Right ventricle myocardium inferior (tissue), 1 donor: ENCODE measurements at regions of chr6 and their contacts with region 1.

Region 1: DNA sequence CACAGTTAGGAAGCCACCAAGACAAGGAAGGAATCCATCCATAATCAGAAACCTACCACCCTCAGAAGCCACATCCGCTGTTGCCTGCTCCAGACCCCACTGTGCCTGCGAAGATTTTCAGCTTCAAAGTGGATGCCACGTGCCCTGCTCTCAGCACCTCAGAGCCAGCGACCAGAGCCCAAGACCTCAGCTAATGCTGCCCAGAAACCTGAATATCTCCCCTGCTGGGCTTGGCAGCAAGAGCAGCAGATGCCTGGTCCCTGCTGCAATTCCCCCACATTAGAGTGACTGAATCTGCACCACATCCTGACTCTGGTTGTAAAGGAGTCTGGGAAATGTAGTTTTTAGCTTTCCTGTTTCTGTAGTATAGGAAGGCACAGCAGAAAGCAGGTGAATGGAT is 10.7 kb upstream of the ULBP3 start:
- DNase-seq: no peak
- ATAC-seq: no peak

Region 2: GRCh38 chr6:149515494-149515893 is 564.1 kb before region 1 on chr6:
- intact Hi-C with region 1: no loop called
- DNase-seq: no peak
- ATAC-seq: no peak

Region 3: GRCh38 chr6:150334790-150335783 is 255.5 kb after region 1 on chr6:
- intact Hi-C with region 1: loop called (anchors 1 kb)
- DNase-seq: no peak
- ATAC-seq: no peak

Region 4: DNA sequence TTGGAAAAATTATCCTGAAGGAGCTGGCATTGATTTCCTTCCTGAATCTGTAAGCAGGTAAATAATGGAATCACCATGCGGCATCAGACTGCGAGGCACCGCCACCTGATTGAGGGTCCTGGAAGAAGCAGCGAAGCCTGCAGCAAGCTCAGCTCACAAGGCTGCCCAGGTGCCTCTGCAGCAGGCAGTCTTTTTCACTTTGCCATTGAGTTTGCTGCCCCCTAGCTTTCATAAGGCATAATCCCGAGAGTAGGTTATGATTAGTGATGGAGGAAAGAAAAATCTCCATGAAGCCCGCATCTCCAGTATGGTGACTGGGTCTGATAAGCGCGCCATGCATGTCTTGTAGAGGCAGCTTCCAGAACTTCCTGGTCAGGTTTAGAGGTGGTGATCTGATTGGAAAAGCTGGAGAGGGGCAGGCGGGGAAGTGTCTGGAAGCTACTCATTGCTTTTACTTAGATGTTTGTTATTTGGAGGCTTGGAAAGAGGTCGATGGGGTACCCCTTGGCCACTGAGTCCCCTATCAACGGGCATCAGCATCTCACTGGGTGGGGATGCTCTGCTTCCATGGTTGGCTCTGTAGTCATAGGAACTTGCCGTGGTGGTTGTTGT is 315.9 kb after region 1 on chr6:
- intact Hi-C with region 1: loop called (anchors 2 kb)
- DNase-seq: no peak
- ATAC-seq: no peak